Posterior cingulate gyrus (tissue), 11 donors: ENCODE measurements at regions of chr5 and their contacts with region 1.

Region 1: GRCh38 chr5:141811287-141812155 is 66.7 kb downstream of the PCDH1 start:
- DNase-seq: peak in 9 of 10 donors; percentile 47 to 95 (median 73)

Region 2: GRCh38 chr5:141747152-141748141 is 64.1 kb before region 1 on chr5:
- intact Hi-C with region 1: loop called (anchors 5 kb)
- DNase-seq: peak; percentile 95 to 99 (median 96)

Region 3: DNA sequence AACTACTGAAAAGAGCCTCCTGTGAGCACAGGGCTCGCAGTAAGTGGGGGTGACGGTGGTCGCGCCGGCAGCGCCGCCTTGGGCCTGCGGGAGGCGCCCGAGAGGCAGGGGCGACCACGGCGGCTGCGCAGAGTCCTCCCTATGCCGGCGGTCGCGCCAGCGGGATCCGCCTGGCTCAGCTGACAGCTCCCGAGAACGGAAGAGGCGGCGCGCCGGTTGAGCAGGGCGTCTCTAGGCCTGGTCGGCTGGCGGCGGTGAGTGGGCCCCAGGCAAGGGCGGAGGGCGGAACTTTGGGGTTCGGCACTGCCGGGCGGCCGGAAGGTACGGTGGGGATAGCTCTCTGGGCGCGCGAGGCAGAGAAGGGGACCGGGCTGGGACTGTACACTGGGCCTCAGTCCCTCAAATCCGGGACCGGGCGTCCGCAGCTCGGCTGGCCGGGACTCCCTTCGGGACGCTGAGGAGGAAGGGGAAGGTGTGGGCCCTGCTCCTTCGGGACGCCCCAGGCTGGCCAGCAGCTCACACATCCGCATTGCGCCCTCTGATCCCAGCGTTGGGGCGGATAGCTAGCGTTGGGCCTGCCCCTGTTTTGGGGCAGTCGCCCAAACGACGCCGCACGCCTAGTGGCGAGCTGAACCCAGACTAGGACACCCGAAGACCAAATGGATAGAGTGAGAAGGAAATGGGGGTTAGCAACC is 157.5 kb after region 1 on chr5 and contains the start of gene RNF14:
- intact Hi-C with region 1: loop called (anchors 10 kb)
- DNase-seq: peak; percentile 82 to 99 (median 92)

Region 4: GRCh38 chr5:142087920-142088679 is 276.6 kb after region 1 on chr5:
- intact Hi-C with region 1: no loop called
- DNase-seq: no peak